ENCODE measurements at regions of chr12 and their contacts with region 1.

Region 1: DNA sequence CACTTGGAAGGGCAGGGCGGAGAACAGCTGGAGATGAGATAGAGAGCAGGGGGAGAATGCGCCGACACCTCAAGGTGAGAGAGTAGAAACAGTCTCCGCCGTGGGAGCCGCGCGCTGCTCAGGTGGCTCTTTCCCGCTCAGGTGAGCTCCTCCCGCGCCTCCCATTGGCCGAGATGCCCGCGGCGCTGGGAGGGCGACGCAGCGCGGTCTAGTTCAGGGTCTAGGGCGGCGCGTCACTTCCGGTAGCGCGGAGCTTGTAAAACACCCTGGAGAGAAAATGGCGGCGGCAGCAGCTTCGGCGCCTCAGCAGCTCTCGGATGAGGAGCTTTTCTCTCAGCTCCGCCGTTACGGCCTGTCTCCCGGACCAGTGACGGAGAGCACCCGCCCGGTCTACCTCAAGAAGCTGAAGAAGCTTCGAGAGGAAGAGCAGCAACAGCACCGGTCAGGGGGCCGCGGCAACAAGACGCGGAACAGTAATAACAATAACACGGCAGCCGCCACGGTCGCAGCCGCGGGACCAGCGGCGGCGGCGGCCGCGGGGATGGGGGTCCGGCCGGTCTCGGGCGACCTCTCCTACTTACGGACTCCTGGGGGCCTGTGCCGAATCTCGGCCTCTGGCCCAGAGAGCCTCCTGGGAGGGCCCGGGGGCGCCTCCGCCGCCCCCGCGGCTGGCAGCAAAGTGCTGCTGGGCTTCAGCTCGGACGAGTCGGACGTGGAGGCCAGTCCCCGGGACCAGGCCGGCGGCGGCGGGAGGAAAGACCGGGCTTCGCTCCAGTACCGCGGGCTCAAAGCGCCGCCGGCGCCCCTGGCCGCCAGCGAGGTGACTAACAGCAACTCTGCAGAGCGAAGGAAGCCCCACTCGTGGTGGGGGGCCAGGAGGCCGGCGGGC is at the start of gene LEMD3:
- DNase-seq: peak; percentile 87
- ATAC-seq: peak; percentile 93
- H3K4me3 Mint-ChIP-seq: peak within 1 kb of the TSS; percentile 100
- H3K27ac Mint-ChIP-seq: peak within 1 kb of the TSS; percentile 99
- H3K4me1 Mint-ChIP-seq: peaks cover 43% of the 10 kb centered on the region
- H3K27me3 Mint-ChIP-seq: no peaks in the 10 kb centered on the region
- CTCF ChIP-seq: no peak
- total RNA-seq, gene LEMD3: 38.2 and 45.5 TPM in 2 replicates

Region 2: GRCh38 chr12:64610149-64610678 is 559.4 kb before region 1 on chr12 and contains the start of gene RASSF3:
- CTCF ChIA-PET with region 1: no interaction called
- POLR2A ChIA-PET with region 1: no interaction called
- intact Hi-C with region 1: loop called (anchors 2 kb)
- DNase-seq: peak; percentile 77
- ATAC-seq: peak; percentile 50
- H3K4me3 Mint-ChIP-seq: peak within 1 kb of the TSS; percentile 99
- H3K27ac Mint-ChIP-seq: peak within 1 kb of the TSS; percentile 97
- H3K4me1 Mint-ChIP-seq: peaks cover 44% of the 10 kb centered on the region
- H3K27me3 Mint-ChIP-seq: no peaks in the 10 kb centered on the region
- CTCF ChIP-seq: no peak
- total RNA-seq, gene RASSF3: 90.9 and 95.7 TPM in 2 replicates

Region 3: DNA sequence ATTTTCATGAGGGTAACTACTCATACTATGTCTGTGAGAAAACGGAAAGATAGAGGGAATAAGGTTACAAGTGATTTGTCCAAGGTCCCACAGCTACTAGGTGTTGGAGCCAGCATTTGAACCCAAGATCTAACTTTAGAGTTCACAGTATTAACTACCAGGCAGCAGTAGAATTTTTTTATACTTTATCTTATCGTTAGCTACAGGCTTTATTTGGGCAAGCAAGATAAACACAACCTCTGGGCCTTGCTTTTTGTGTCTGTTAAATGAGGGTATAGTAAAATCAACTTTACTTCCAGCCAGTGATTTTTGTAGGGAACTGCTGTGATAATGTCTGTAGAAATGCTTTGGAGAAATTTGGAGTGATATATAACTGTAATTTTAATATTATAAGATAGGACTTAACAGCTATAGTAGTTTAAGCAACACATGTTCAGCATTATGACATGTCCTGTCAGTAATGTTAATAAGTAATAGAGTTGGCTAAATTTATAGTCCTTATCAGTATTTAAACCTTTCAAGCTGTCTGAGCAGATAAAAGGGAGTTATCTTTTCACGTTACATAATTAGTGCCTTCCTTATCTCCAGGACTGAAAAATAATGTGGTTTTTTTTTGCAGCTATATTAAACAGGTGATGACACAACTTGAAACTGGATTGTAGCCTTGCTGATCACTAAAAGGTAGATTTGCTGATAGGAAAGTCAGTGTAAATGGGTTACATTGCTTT is 12.6 kb after region 1 on chr12:
- CTCF ChIA-PET with region 1: interaction called, 3 read pairs
- POLR2A ChIA-PET with region 1: interaction called, 16 read pairs
- intact Hi-C with region 1: loop called (anchors 1 kb)
- DNase-seq: no peak
- ATAC-seq: no peak
- H3K4me3 Mint-ChIP-seq: no peak overlapping the region
- H3K27ac Mint-ChIP-seq: no peak overlapping the region
- H3K4me1 Mint-ChIP-seq: peaks cover 62% of the 10 kb centered on the region
- H3K27me3 Mint-ChIP-seq: no peaks in the 10 kb centered on the region
- CTCF ChIP-seq: no peak

Region 4: DNA sequence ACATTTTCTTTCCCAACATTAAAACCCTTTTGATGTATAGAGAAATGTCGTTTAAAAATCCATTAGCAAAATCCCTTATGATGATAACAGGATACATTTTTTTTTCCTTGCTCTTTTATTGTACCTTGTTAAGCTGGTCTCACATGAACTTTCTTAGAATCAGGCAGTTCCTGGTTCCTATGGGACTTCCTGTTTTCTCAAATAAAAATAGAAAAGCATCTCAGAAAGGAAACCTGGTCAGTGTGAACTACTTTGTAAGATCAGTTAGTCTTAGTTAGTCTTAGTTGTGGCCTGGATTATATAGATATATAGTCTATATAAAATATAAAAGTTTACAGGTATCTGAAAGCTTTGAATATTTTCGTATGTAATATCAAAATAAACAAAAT is 40.1 kb after region 1 on chr12:
- CTCF ChIA-PET with region 1: no interaction called
- POLR2A ChIA-PET with region 1: interaction called, 11 read pairs
- intact Hi-C with region 1: loop called (anchors 2 kb)
- DNase-seq: no peak
- ATAC-seq: peak; percentile 42
- H3K4me3 Mint-ChIP-seq: peak overlapping the region; percentile 69
- H3K27ac Mint-ChIP-seq: peak overlapping the region; percentile 85
- H3K4me1 Mint-ChIP-seq: peaks cover 56% of the 10 kb centered on the region
- H3K27me3 Mint-ChIP-seq: no peaks in the 10 kb centered on the region
- CTCF ChIP-seq: no peak

Region 5: DNA sequence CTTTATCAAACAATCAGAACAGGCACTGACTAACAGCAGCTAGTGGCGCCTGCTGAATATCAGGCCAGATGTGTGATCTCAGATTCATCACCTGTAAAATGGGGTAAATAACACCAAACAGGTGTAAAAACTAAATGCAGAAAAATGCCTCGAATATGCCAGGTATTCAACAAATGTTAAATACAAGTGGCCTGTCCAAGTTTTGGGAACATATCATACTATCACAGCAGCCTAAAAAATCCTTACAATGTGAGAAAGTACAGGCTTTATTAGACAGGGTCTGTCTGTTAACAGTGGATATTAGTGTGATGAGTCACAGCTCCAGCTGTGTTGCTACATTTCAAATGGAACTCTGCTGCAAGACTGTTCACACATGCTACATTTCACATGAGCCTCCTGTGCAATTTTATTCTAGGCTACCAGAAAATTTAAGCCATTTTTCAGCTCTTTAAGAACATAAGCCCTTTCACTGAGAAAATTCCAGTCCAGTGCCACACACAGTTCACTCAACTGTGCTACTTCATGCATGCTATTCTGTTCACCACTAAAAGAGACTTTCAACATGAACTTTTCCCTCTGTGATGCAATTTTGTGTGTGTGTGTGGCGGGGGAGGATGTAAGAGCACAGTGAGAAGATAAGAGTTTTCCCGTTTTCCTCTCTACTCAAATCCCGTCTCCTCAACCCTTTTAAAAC is 165.6 kb after region 1 on chr12:
- CTCF ChIA-PET with region 1: no interaction called
- POLR2A ChIA-PET with region 1: no interaction called
- intact Hi-C with region 1: no loop called
- DNase-seq: no peak
- ATAC-seq: no peak
- H3K4me3 Mint-ChIP-seq: no peak overlapping the region
- H3K27ac Mint-ChIP-seq: no peak overlapping the region
- H3K4me1 Mint-ChIP-seq: no peaks in the 10 kb centered on the region
- H3K27me3 Mint-ChIP-seq: peaks cover 2% of the 10 kb centered on the region
- CTCF ChIP-seq: no peak

Region 6: GRCh38 chr12:65432606-65433005 is 263.0 kb after region 1 on chr12:
- CTCF ChIA-PET with region 1: no interaction called
- POLR2A ChIA-PET with region 1: no interaction called
- intact Hi-C with region 1: no loop called
- DNase-seq: no peak
- ATAC-seq: no peak
- H3K4me3 Mint-ChIP-seq: no peak overlapping the region
- H3K27ac Mint-ChIP-seq: no peak overlapping the region
- H3K4me1 Mint-ChIP-seq: no peaks in the 10 kb centered on the region
- H3K27me3 Mint-ChIP-seq: no peaks in the 10 kb centered on the region
- CTCF ChIP-seq: no peak

Region 7: GRCh38 chr12:66169221-66170170 is 999.9 kb after region 1 on chr12 and contains the start of gene TMBIM4:
- CTCF ChIA-PET with region 1: no interaction called
- POLR2A ChIA-PET with region 1: interaction called, 13 read pairs
- intact Hi-C with region 1: no loop called
- DNase-seq: peak; percentile 84
- ATAC-seq: peak; percentile 85
- H3K4me3 Mint-ChIP-seq: peak within 1 kb of the TSS; percentile 98
- H3K27ac Mint-ChIP-seq: peak within 1 kb of the TSS; percentile 100
- H3K4me1 Mint-ChIP-seq: peaks cover 47% of the 10 kb centered on the region
- H3K27me3 Mint-ChIP-seq: no peaks in the 10 kb centered on the region
- CTCF ChIP-seq: no peak
- total RNA-seq, gene TMBIM4: 91.8 and 93.5 TPM in 2 replicates